Kidney (tissue), 22 donors: ENCODE measurements at regions of chr10 and their contacts with region 1.

Region 1: DNA sequence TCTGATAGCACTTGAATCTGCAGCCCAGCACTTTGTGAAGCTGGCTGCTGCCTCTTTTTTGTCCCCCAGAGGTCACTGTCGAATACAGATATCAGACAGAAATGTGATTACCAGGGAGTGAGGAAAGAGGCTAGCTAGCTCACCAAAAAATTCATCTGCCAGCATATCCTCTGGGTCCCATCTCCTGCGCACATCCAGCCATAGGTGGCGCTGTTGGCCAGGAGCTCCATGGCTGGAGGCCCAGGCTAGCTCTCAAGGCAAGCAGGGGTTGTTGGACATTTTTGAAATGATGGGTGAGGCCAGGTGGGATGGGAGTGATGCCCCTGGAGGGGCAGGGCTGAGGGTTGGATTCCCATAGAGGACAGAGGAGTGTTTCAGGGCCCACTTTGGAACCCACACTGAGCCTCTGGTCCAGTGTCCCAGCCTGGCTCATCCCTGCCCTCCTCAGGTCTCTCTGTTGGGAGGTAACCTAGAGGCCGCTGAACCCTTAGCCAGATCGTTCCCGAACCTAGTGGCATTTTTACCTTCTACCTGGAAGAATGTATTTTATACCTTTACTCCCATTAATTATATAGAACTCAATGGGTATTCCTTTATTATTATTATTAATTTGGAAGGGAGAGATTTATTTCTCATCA is 14.8 kb downstream of the DPCD start:
- DNase-seq: peak; percentile 81 to 91 (median 88)
- H3K4me3 ChIP-seq: no peak overlapping the region
- H3K27ac ChIP-seq: no peak overlapping the region
- H3K4me1 ChIP-seq: no peaks in the 10 kb centered on the region
- H3K27me3 ChIP-seq: no peaks in the 10 kb centered on the region
- CTCF ChIP-seq: peak; percentile 76

Region 2: DNA sequence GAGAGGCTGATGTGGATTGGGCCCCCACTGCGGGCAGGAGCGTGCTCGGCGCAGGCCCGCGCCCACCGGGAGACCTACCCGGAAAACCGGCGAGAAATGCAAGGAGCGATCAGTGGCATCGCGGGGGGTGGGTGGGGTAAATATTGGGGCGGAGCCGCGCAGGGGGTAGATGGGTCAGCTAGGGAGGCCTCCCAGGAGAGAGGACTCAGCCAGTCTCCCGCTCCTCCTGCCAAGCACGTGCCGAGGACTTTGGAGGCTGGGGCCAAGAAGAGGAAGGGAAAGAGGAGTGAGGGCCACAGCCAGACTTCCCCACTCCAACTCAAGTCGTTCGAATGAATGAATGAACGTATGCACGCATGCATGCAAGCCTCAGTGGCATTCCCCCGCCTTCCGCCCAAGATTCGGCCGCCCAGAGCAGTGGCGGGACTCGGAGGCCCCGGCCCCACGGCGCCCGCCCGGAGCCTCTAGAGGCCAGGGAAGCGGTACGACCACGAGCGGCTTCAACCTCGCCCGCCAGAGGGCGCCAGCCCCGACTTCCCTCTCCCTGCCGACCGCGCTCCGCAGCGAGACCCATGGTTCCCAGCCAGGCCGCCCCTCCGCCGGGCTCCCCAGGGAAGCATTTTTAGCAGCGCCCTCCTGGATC is 176.8 kb after region 1 on chr10:
- intact Hi-C with region 1: loop called (anchors 10 kb)
- DNase-seq: peak; percentile 84 to 89 (median 87)
- H3K4me3 ChIP-seq: peak overlapping the region; percentile 11 to 56 (median 53)
- H3K27ac ChIP-seq: no peak overlapping the region
- H3K4me1 ChIP-seq: peaks cover 0 to 34% (median 4%) of the 10 kb centered on the region in 3 donors
- H3K27me3 ChIP-seq: peaks cover 21% of the 10 kb centered on the region
- CTCF ChIP-seq: peak; percentile 79